ENCODE measurements at regions of chr3 and their contacts with region 1.

Region 1: DNA sequence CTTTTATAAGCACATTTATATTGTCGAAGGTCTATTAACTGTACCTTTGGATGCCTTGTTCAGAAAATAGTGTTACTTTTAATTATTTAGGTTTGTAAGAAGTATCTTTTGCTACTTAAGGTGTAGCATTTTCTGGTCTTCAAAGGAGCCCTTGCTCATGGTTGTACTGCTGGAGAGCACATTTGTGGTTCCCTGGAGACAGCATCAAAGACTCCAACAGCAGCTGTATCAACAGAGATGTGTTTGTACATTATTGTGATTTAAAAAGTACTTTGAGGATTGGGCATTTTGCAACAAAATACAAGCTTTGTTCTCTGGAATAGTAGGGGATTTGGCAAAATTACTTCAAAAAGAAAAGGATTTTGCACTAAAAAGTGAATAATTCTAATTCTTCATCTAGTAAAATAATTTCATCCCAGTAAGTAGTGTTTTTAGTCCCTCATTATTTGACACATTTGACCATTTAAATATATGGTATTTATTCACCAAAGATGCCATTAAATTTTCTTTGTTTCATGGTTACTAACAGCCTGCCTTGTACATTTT is 16.5 kb downstream of the TBC1D23 start:
- DNase-seq: no peak
- H3K4me3 ChIP-seq: no peak overlapping the region
- H3K27ac ChIP-seq: no peak overlapping the region
- H3K4me1 ChIP-seq: no peaks in the 10 kb centered on the region
- H3K27me3 ChIP-seq: no peaks in the 10 kb centered on the region
- CTCF ChIP-seq: no peak

Region 2: DNA sequence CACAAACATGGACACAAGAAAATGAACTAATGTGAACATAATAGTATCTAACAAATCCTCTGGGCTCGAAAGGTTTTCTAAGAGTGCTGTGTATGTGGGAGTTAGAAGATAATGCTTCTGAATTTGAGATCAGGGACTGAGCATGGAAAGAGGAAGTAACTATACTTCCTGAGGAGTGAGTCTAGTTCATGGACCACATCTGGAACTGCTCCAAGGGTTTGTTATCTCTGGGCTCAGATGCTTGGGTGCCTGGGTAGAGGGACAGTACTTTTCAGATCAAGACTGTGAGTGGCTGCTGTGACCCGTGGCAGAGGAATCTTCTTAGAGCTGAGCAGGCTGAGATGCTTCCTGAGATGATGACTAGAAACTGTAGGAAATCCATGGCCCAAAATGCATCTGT is 12.0 kb after region 1 on chr3:
- CTCF ChIA-PET with region 1: no interaction called
- POLR2A ChIA-PET with region 1: interaction called, 11 read pairs
- intact Hi-C with region 1: no loop called
- DNase-seq: no peak
- H3K4me3 ChIP-seq: no peak overlapping the region
- H3K27ac ChIP-seq: no peak overlapping the region
- H3K4me1 ChIP-seq: no peaks in the 10 kb centered on the region
- H3K27me3 ChIP-seq: no peaks in the 10 kb centered on the region
- CTCF ChIP-seq: no peak

Region 3: GRCh38 chr3:100471444-100471843 is 194.1 kb after region 1 on chr3:
- CTCF ChIA-PET with region 1: no interaction called
- POLR2A ChIA-PET with region 1: no interaction called
- intact Hi-C with region 1: no loop called
- DNase-seq: no peak
- H3K4me3 ChIP-seq: no peak overlapping the region
- H3K27ac ChIP-seq: no peak overlapping the region
- H3K4me1 ChIP-seq: no peaks in the 10 kb centered on the region
- H3K27me3 ChIP-seq: no peaks in the 10 kb centered on the region
- CTCF ChIP-seq: no peak